ENCODE measurements at regions of chr3 and their contacts with region 1.

Region 1: GRCh38 chr3:191412759-191413158 is 48.2 kb upstream of the PYDC2 start:
- DNase-seq: no peak
- ATAC-seq: peak; percentile 64
- H3K4me3 ChIP-seq: no peak overlapping the region
- H3K27ac ChIP-seq: no peak overlapping the region; the same call in 1 of the 2 replicates
- H3K4me1 ChIP-seq: no peaks in the 10 kb centered on the region
- H3K27me3 ChIP-seq: no peaks in the 10 kb centered on the region
- CTCF ChIP-seq: no peak

Region 2: GRCh38 chr3:191235331-191236314 is 177.1 kb before region 1 on chr3:
- CTCF ChIA-PET with region 1: interaction called, 10 read pairs
- POLR2A ChIA-PET with region 1: no interaction called
- in situ Hi-C with region 1: no loop called
- intact Hi-C with region 1: no loop called
- DNase-seq: no peak
- ATAC-seq: no peak
- H3K4me3 ChIP-seq: no peak overlapping the region
- H3K27ac ChIP-seq: no peak overlapping the region
- H3K4me1 ChIP-seq: peaks cover 18% of the 10 kb centered on the region
- H3K27me3 ChIP-seq: no peaks in the 10 kb centered on the region
- CTCF ChIP-seq: no peak

Region 3: GRCh38 chr3:191296041-191296541 is 116.7 kb before region 1 on chr3:
- CTCF ChIA-PET with region 1: no interaction called
- POLR2A ChIA-PET with region 1: no interaction called
- in situ Hi-C with region 1: no loop called
- intact Hi-C with region 1: no loop called
- DNase-seq: no peak
- ATAC-seq: no peak
- H3K4me3 ChIP-seq: no peak overlapping the region
- H3K27ac ChIP-seq: no peak overlapping the region
- H3K4me1 ChIP-seq: no peaks in the 10 kb centered on the region
- H3K27me3 ChIP-seq: no peaks in the 10 kb centered on the region
- CTCF ChIP-seq: no peak

Region 4: DNA sequence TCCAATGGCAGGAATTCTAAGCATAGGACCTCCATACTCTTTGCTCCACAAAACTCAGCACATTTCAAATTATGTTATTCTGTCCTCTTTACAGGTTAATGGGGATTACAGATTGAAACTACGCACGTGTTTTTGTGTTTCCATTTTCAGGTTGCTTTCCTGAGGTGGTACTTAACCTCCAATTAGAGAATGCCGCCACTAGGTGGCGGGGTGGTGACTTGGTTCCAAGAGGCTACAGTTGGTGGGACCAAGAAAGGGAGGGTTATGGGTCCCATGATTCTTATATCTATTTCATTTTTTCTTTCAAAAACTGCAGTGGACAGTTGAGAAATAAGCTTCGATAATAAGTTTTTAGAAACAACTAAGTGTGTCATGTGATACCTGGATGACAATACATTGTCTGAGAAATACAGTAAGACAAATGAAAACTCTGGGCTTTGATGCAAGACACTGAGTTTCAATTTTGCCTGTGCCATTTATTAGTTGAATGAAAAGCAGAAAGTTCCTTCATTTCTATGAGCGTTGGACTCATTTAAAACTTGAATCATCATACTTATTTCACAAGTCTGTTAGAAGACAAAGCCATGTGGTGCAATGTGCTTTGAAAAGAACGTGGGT is 775.6 kb after region 1 on chr3:
- CTCF ChIA-PET with region 1: no interaction called
- POLR2A ChIA-PET with region 1: no interaction called
- in situ Hi-C with region 1: no loop called
- intact Hi-C with region 1: loop called (anchors 10 kb)
- DNase-seq: peak; percentile 20
- ATAC-seq: peak; percentile 82
- H3K4me3 ChIP-seq: no peak overlapping the region
- H3K27ac ChIP-seq: no peak overlapping the region
- H3K4me1 ChIP-seq: no peaks in the 10 kb centered on the region
- H3K27me3 ChIP-seq: no peaks in the 10 kb centered on the region
- CTCF ChIP-seq: peak; percentile 82

Region 5: GRCh38 chr3:192444096-192444790 is 1031.5 kb after region 1 on chr3:
- CTCF ChIA-PET with region 1: interaction called, 6 read pairs
- POLR2A ChIA-PET with region 1: no interaction called
- in situ Hi-C with region 1: no loop called
- intact Hi-C with region 1: loop called (anchors 1 kb)
- DNase-seq: peak; percentile 51
- ATAC-seq: peak; percentile 94
- H3K4me3 ChIP-seq: no peak overlapping the region
- H3K27ac ChIP-seq: no peak overlapping the region
- H3K4me1 ChIP-seq: no peaks in the 10 kb centered on the region
- H3K27me3 ChIP-seq: peaks cover 18% of the 10 kb centered on the region
- CTCF ChIP-seq: peak; percentile 99